Mucosa of descending colon (tissue), 3 donors: ENCODE measurements at regions of chr9 and their contacts with region 1.

Region 1: GRCh38 chr9:84397151-84397728 is 56.7 kb upstream of the SLC28A3 start:
- DNase-seq: peak in 2 of 3 donors; percentile 70 to 76
- ATAC-seq: peak; percentile 91
- H3K4me3 ChIP-seq: no peak overlapping the region
- H3K4me1 ChIP-seq: no peaks in the 10 kb centered on the region
- CTCF ChIP-seq: peak; percentile 84

Region 2: DNA sequence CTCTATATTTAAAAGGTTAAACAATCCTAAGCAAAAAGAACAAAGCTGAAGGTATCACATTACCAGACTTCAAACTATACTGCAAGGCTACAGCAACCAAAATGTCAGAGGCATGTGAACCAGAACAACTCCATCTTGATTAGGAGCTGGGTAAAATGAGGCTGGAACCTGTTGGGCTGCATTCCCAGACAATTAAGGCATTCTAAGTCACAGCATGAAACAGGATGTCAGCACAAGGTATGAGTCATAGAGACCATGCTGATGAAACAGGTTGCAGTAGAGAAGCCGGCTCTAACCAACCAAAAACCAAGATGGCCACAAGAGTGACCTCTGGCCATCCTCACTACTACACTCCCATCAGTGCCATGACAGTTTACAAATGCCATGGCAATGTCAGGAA is 1586.3 kb before region 1 on chr9:
- intact Hi-C with region 1: no loop called
- DNase-seq: no peak
- ATAC-seq: no peak
- H3K4me3 ChIP-seq: no peak overlapping the region
- H3K4me1 ChIP-seq: no peaks in the 10 kb centered on the region
- CTCF ChIP-seq: no peak

Region 3: DNA sequence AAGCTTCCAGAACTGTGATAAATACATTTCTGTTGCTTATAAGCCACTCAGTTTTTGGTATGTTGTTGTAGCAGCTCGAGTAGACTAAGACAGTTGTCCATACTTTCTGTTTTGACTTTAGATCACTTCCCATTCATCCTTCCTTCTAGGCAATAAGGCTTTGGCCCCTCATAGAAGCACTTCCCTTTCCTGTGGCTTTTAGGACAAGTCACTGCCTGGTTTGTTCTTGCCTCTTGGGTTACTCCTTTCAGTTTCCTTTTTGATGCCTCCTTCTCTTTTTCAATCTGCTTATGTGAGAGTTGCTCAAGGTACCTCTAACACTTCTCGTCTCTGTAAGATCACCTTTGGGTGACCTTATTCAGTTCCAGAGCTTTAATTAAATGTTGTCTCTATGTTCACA is 199.9 kb after region 1 on chr9:
- intact Hi-C with region 1: no loop called
- DNase-seq: no peak
- ATAC-seq: no peak
- H3K4me3 ChIP-seq: no peak overlapping the region
- H3K4me1 ChIP-seq: no peaks in the 10 kb centered on the region
- CTCF ChIP-seq: no peak

Region 4: DNA sequence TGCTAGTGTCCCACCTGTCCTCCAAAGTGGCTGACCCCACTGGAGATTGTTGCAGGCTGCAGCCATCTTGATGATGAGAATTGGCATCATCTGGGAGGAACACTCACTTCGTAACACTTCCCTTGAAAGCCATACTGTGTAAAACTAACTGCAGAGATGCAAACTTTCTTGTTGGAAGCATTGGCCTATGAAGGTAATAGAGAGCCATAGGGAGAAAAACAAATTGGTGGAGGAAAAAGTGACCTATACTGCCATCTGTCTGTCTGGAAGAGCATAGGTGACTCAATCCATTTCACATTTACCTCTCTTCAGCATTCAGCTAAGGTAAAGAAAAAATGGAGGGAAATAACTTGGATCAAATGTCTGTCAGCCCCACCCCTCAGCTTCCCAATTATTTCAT is 745.7 kb after region 1 on chr9:
- intact Hi-C with region 1: loop called in 1 of 2 experiments (anchors 10 kb)
- DNase-seq: no peak
- ATAC-seq: peak; percentile 70
- H3K4me3 ChIP-seq: no peak overlapping the region
- H3K4me1 ChIP-seq: no peaks in the 10 kb centered on the region
- CTCF ChIP-seq: peak; percentile 27

Region 5: DNA sequence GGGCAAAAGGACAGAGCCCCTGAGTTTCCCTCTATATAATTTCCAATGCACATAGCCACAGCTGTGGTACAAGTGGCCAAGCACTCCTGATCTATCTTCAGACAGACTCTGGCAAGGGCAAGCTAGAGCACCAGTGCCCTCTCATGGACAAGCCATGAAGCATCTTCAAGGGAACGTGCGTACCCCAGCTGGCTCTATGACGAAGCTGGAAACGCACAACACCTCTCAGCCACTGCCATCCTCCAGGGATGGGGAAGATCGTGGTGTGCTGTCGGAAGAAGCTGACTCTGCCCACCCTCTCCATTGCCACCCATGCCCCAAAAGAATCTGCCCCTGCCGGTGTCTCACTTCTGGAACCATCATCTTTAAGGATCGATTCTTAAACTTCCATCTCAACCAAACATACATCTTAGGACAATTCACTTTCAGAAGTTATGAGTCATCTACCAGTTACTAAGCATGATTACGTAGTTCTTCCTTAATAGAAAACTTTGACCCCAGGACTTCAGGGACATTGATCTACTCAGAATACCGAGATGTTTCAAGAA is 861.7 kb after region 1 on chr9:
- intact Hi-C with region 1: loop called in 1 of 2 experiments (anchors 5 kb)
- DNase-seq: peak in 2 of 3 donors; percentile 52 to 63
- ATAC-seq: peak; percentile 96
- H3K4me3 ChIP-seq: no peak overlapping the region
- H3K4me1 ChIP-seq: peaks cover 11% of the 10 kb centered on the region
- CTCF ChIP-seq: peak; percentile 34

Region 6: DNA sequence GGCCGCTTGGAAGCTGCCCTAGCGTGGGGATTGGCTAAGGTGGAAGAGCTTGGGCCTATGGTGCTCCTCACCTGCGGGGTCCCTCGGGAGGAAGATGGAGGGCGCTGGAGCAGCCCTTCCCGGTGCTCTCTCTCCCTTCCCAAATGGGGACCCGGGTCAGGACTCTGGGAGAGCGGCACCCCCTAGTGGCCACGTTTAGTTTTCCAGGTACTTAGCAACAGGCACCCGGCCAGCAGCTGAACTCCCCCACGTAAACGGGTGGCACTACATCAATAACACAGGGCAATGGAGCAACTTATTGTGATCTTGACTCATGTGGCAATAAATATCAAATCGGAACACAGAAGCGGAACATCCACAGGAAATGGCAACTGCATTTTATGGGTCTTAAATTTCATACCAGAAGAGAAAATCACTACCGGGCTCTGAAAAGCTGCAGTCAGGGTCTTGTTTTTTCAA is 1027.9 kb after region 1 on chr9:
- intact Hi-C with region 1: loop called in 1 of 2 experiments (anchors 5 kb)
- DNase-seq: peak in 2 of 3 donors; percentile 55 to 78
- ATAC-seq: peak; percentile 76
- H3K4me3 ChIP-seq: no peak overlapping the region
- H3K4me1 ChIP-seq: no peaks in the 10 kb centered on the region
- CTCF ChIP-seq: peak; percentile 15

Region 7: DNA sequence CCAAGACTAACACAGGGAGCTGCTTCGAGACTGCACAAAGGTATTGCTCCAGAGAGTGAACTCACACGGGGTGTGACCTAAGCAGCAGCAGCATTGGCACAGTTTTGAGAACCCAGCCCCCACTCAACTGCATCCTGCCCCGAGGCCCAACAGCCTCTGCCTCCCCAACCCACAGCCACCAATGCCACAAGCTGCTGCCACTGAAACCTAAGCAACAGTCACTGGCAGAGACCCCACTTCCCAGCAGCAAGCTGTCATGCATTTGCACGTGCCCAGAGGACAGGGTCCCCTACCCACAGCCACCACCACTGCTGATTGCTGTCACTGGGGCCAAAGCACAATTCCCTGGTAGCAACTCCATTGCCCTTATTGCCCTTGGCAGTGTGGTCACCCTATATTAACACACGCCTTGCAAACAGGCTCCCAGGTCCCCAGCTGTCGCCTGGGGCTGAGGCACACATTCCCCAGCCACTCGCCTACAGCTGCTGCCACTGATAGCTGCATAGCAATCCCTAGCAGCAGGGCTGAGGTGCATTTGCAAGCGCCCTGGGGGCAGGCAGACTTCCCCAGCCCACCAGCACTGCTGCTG is 1203.5 kb after region 1 on chr9:
- intact Hi-C with region 1: loop called (anchors 10 kb)
- DNase-seq: no peak
- ATAC-seq: peak; percentile 48
- H3K4me3 ChIP-seq: no peak overlapping the region
- H3K4me1 ChIP-seq: no peaks in the 10 kb centered on the region
- CTCF ChIP-seq: no peak